K562 (cell line): ENCODE measurements at regions of chr12 and their contacts with region 1.

Region 1: GRCh38 chr12:9039397-9039977 is 50.1 kb downstream of the KLRG1 start:
- DNase-seq: peak; percentile 39 to 53 (median 42)
- ATAC-seq: peak; percentile 50; the same call in 2 of the 3 replicates
- H3K4me3 ChIP-seq: no peak overlapping the region
- H3K27ac ChIP-seq: no peak overlapping the region
- H3K4me1 ChIP-seq: no peaks in the 10 kb centered on the region
- H3K27me3 ChIP-seq: no peaks in the 10 kb centered on the region
- CTCF ChIP-seq: peak; percentile 44 to 74 (median 48); a peak in 4 of 6 replicates
- EP300 ChIP-seq: no peak
- POLR2A ChIP-seq: no peak
- RAD21 ChIP-seq: peak; percentile 73 to 79

Region 2: DNA sequence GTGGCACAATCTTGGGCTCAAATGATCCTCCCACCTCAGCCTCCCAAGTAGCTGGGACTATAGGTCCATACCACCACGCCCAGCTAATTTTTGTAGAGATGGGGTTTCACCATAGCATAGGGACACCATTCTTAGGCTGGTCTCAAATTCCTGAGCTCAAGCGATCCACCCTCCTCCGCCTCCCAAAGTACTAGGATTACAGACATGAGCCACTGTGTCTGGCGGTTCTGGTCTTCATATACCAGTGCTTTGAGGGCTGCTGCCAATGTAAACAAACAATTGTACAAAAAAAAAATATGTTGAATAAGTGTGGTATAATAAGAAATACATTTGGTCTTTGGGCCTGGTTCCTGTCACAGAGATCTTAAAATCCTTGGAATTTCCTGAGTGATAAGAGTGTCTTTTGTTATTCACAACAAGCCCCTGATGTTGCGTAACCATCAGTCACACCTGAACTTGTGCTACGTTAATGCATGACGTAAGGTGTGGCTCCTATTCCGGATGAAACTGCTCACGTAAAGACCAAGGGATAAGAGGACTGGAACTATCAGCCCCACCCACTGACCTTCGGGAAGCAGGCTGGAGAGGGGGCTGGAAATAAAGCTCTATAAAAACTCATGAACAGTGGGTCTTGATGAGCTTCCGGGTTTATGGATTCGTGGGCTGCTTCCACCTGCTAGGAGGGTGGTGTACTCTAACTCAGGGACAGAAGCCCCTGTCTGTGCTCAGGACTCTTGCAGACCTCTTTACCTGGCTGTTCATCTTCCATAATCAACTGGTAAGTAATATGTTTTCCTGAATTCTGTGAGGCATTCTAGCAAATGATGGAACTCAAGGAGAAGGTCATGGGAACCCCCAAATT is 358.2 kb before region 1 on chr12:
- CTCF ChIA-PET with region 1: interaction called, 22 read pairs
- POLR2A ChIA-PET with region 1: no interaction called
- in situ Hi-C with region 1: loop called (anchors 5 kb)
- intact Hi-C with region 1: no loop called
- DNase-seq: no peak
- ATAC-seq: no peak
- H3K4me3 ChIP-seq: no peak overlapping the region
- H3K27ac ChIP-seq: no peak overlapping the region
- H3K4me1 ChIP-seq: no peaks in the 10 kb centered on the region; a peak in 2 of 5 replicates
- H3K27me3 ChIP-seq: no peaks in the 10 kb centered on the region; a peak in 2 of 5 replicates
- CTCF ChIP-seq: no peak
- EP300 ChIP-seq: no peak
- POLR2A ChIP-seq: no peak
- RAD21 ChIP-seq: no peak

Region 3: DNA sequence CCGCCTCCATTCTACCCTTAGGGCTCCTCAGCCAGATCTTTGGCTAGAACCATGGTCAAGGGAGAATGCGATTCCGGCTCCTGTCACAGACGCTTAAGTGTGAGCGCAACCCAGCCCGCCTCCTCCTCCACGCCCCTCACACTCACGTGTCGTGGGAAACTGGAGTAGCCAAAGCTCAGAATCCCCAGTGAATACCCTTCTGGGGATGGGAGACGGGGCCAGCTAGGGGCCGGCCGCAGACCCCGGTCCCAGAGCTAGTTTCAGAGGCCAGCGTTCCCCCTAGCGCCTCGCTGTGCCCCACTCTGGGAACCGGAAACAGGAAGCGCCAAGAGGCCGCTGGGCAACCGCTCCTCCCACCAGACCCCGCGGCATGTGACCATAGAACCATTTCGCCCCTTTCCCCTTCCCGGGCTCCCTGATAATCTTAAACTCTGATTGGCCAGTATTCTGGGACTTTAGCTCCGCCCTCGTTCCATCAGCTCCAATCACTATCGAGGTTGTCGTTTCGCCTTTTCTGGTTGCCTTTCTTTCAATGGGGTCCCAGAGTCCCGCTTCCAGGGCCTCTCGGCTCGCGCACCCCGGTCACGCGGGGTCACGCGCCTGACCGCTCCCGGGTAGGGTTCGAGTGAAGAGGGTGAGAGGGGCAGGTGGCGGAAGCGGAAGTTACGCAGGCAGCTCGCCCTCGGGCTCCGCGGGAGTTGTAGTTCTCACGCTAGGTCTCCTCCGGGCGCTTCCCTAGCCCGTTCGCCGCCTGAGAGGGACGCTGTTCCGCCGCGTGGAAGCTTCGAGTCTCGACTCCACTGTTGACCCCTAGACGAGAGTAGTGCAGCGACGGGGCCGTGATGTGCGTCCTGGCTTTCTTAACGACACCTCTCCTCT is 89.9 kb before region 1 on chr12 and contains the start of gene M6PR:
- CTCF ChIA-PET with region 1: interaction called, 12 read pairs
- POLR2A ChIA-PET with region 1: no interaction called
- in situ Hi-C with region 1: no loop called
- intact Hi-C with region 1: loop called (anchors 1 kb)
- DNase-seq: peak; percentile 89 to 94 (median 92)
- ATAC-seq: peak; percentile 93
- H3K4me3 ChIP-seq: peak within 1 kb of the TSS; percentile 96
- H3K27ac ChIP-seq: peak within 1 kb of the TSS; percentile 96
- H3K4me1 ChIP-seq: peaks cover 0 to 8% of the 10 kb centered on the region in 2 experiments; a peak in 2 of 5 replicates
- H3K27me3 ChIP-seq: no peaks in the 10 kb centered on the region
- CTCF ChIP-seq: peak; percentile 65 to 76 (median 72)
- EP300 ChIP-seq: 0 out of 2 replicates have a peak, but pooled peaks have one; percentile 7
- POLR2A ChIP-seq: peak; percentile 88
- RAD21 ChIP-seq: peak; percentile 53 to 67; a peak in 3 of 4 replicates
- polyA plus RNA-seq, gene M6PR: 86.8 to 133 TPM